Dorsolateral prefrontal cortex (tissue), 120 donors: ENCODE measurements at regions of chr22 and their contacts with region 1.

Region 1: GRCh38 chr22:38201710-38202436 is at the start of gene MAFF:
- DNase-seq: peak; percentile 86 to 96 (median 92)
- H3K4me3 ChIP-seq: peak within 1 kb of the TSS; percentile 62 to 89 (median 78)
- H3K27ac ChIP-seq: peak within 1 kb of the TSS; percentile 55 to 98 (median 90)
- H3K27me3 ChIP-seq: no peaks in the 10 kb centered on the region
- CTCF ChIP-seq: peak in 6 of 56 donors; percentile 7 to 28 (median 12)
- total RNA-seq, gene MAFF: 3.4 to 113 (median 10.9) TPM

Region 2: GRCh38 chr22:38114484-38115398 is 87.1 kb before region 1 on chr22:
- intact Hi-C with region 1: loop called in 1 of 2 experiments (anchors 5 kb)
- DNase-seq: peak; percentile 86 to 93 (median 90)
- H3K4me3 ChIP-seq: no peak overlapping the region
- H3K27ac ChIP-seq: peak overlapping the region in 39 of 59 donors; percentile 14 to 80 (median 62)
- H3K27me3 ChIP-seq: no peaks in the 10 kb centered on the region
- CTCF ChIP-seq: peak; percentile 46 to 97 (median 92)

Region 3: GRCh38 chr22:38153821-38154562 is 47.9 kb before region 1 on chr22:
- intact Hi-C with region 1: loop called in 1 of 2 experiments (anchors 5 kb)
- DNase-seq: peak in 2 of 10 donors; percentile 9 to 12
- H3K4me3 ChIP-seq: no peak overlapping the region
- H3K27ac ChIP-seq: peak overlapping the region in 2 of 59 donors; percentile 8 to 19
- H3K27me3 ChIP-seq: no peaks in the 10 kb centered on the region
- CTCF ChIP-seq: no peak

Region 4: DNA sequence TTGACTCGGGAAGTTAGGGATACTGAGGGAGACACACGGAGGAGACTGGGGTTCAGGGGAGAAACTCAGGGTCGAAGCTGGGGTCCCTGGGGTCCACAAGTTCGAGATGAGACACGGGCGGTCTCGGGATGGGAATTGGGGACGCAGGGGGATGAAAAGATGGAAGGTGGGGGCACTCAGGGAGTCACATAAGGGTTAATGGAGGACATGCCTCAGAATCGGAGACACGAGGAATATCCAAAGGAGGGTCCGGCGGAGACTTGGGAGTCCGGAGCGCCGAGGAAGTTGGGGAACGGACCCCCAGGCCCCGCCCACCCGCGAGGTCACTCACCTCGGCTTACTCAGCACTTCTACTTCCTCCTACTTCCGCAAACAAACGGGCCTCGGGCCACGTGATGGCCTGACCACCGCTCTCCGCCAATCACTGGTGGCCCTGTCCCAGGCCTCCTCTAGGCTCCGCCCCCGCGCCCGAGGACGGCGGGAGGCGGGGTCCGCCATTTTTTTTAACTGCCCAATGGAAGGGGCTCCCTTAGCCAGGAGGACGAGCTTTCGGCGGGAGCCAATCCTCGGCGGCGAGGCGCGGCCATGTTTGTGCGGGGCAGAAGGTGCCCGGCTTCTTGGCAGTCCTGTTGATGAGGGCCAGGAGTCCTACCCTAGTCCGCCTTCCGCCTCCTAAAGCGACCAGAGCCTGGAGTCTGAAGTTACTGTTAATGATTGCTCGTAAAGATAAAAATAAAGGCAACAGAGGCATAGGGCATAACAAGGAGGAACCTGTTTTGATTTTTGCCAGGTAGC is 20.2 kb before region 1 on chr22 and contains the start of gene PLA2G6:
- intact Hi-C with region 1: loop called in 1 of 2 experiments (anchors 2 kb)
- DNase-seq: peak; percentile 97 to 99 (median 98)
- H3K4me3 ChIP-seq: peak within 1 kb of the TSS; percentile 53 to 94 (median 81)
- H3K27ac ChIP-seq: peak within 1 kb of the TSS; percentile 87 to 99 (median 96)
- H3K27me3 ChIP-seq: no peaks in the 10 kb centered on the region
- CTCF ChIP-seq: peak in 18 of 56 donors; percentile 4 to 47 (median 20)
- total RNA-seq, gene PLA2G6: 45.0 to 160 (median 76.4) TPM

Region 5: GRCh38 chr22:38383417-38383816 is 181.5 kb after region 1 on chr22:
- intact Hi-C with region 1: no loop called
- DNase-seq: no peak
- H3K4me3 ChIP-seq: no peak overlapping the region
- H3K27ac ChIP-seq: no peak overlapping the region
- H3K27me3 ChIP-seq: no peaks in the 10 kb centered on the region
- CTCF ChIP-seq: no peak